ENCODE measurements at regions of chr9 and their contacts with region 1.

Region 1: GRCh38 chr9:34665381-34666250 is 3.2 kb upstream of the CCL27 start:
- DNase-seq: peak; percentile 93
- H3K4me3 Mint-ChIP-seq: peak overlapping the region; percentile 77
- H3K27ac Mint-ChIP-seq: peak overlapping the region; percentile 80
- H3K4me1 Mint-ChIP-seq: peaks cover 39% of the 10 kb centered on the region
- H3K27me3 Mint-ChIP-seq: no peaks in the 10 kb centered on the region

Region 2: GRCh38 chr9:34611829-34612630 is 53.6 kb before region 1 on chr9 and contains the start of gene RPP25L:
- CTCF ChIA-PET with region 1: interaction called, 3 read pairs
- intact Hi-C with region 1: loop called (anchors 1 kb)
- DNase-seq: peak; percentile 80
- H3K4me3 Mint-ChIP-seq: peak within 1 kb of the TSS; percentile 87
- H3K27ac Mint-ChIP-seq: peak within 1 kb of the TSS; percentile 83
- H3K4me1 Mint-ChIP-seq: peaks cover 21% of the 10 kb centered on the region
- H3K27me3 Mint-ChIP-seq: no peaks in the 10 kb centered on the region
- total RNA-seq, gene RPP25L: 25.7 to 27.0 TPM

Region 3: DNA sequence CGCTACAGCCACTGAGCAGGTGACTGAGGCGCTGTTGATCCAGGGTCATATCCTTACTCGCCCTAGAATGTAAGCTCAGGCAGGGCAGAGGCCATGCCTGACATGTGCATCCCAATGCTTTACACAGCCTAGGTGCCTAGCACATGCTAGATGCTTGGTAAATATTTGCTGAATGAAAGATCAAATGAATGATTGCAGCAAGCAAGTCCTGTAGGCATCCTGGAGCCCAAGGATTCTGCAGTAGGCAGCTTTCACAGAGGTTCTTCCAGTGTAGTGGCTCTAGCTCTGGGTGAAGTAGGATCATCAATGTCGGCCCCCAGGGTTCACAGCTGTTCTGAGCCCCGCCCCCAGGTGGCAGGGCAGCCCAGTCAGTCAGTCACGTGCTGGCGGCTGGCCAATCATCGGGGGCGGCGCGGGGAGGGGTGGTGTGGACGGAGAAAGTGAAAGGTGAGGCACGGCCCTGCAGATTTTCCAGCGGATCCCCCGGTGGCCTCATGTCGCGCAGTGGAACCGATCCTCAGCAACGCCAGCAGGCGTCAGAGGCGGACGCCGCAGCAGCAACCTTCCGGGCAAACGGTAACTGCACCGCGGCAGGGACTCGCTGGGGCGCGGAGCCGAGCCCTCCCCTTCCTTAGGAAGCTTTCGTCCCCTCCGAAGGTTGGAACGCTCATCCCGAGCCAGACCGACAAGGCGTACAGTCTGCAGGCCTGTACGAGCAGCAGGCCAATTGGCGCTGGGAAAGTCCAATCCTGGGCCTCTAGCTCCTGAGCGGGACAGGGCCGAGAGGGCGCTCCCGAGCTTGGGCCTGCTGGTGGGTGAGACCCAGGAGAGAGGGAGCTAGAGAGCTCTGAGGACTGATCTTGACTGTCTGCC is 19.2 kb before region 1 on chr9 and contains the start of gene GALT:
- CTCF ChIA-PET with region 1: interaction called, 40 read pairs
- intact Hi-C with region 1: loop called (anchors 1 kb)
- DNase-seq: peak; percentile 98
- H3K4me3 Mint-ChIP-seq: peak within 1 kb of the TSS; percentile 86
- H3K27ac Mint-ChIP-seq: peak within 1 kb of the TSS; percentile 83
- H3K4me1 Mint-ChIP-seq: peaks cover 18% of the 10 kb centered on the region
- H3K27me3 Mint-ChIP-seq: no peaks in the 10 kb centered on the region
- total RNA-seq, gene GALT: 42.0 to 44.6 TPM

Region 4: DNA sequence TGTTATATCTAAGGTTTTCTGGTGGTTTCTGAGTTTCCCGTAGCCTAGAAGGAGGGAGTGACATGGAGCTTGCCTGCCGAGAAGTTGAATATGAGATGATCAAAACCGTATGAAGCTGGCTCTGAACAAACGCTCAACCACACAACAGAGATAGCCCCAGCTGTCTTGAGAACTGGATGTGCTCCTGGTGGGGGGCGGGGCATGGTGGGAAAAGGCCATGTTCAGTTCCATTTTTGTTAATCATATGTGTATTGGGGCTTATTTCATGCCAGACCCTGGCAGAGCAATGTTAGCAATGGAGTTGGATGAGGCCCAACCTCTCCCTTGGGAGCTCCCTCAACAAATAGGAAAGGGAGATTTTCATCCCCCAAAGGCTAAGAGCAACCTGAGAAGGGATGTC is 20.6 kb after region 1 on chr9:
- CTCF ChIA-PET with region 1: interaction called, 3 read pairs
- intact Hi-C with region 1: loop called (anchors 1 kb)
- DNase-seq: no peak
- H3K4me3 Mint-ChIP-seq: no peak overlapping the region
- H3K27ac Mint-ChIP-seq: no peak overlapping the region
- H3K4me1 Mint-ChIP-seq: peaks cover 9% of the 10 kb centered on the region
- H3K27me3 Mint-ChIP-seq: no peaks in the 10 kb centered on the region

Region 5: GRCh38 chr9:35071814-35072460 is 406.3 kb after region 1 on chr9:
- CTCF ChIA-PET with region 1: no interaction called
- intact Hi-C with region 1: loop called (anchors 2 kb)
- DNase-seq: peak; percentile 77
- H3K4me3 Mint-ChIP-seq: peak overlapping the region; percentile 92
- H3K27ac Mint-ChIP-seq: peak overlapping the region; percentile 96
- H3K4me1 Mint-ChIP-seq: peaks cover 57% of the 10 kb centered on the region
- H3K27me3 Mint-ChIP-seq: no peaks in the 10 kb centered on the region

Region 6: GRCh38 chr9:35111001-35111933 is 445.7 kb after region 1 on chr9:
- CTCF ChIA-PET with region 1: no interaction called
- intact Hi-C with region 1: loop called (anchors 2 kb)
- DNase-seq: peak; percentile 97
- H3K4me3 Mint-ChIP-seq: peak overlapping the region; percentile 56
- H3K27ac Mint-ChIP-seq: peak overlapping the region; percentile 88
- H3K4me1 Mint-ChIP-seq: peaks cover 44% of the 10 kb centered on the region
- H3K27me3 Mint-ChIP-seq: no peaks in the 10 kb centered on the region

Region 7: DNA sequence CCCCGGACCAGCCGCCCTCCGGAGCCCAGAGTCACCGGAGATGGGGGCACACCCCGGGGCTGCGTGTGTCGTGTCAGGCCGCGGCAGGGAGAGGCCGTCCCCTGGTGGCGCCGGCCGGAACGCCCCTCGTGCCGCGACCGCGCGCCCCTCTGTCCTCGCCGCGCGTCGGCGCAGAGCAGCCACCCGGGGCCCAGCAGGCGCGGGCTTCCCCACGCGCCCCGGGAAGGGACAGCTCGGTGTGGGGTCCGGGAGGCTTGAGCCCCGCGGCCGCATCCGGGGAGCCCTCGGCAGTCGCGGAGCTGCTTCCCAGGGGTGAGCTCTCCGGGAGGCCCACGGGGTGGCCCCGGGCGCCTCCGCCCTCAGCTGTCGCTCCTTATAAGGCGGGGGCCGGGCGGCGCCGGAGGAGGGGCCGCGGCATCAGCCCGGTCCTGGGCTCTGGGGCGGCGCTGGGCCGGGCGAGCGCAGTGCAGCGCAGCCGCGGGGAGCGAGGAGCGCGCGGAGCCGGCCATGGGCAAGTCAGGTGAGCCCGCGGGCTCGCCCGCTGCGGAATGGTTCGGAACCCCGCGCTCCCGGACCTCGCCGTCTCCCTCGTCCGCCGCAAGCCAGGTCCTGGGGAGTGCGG is 1470.8 kb after region 1 on chr9 and contains the start of gene GLIPR2:
- CTCF ChIA-PET with region 1: no interaction called
- intact Hi-C with region 1: loop called (anchors 10 kb)
- DNase-seq: peak; percentile 80
- H3K4me3 Mint-ChIP-seq: peak within 1 kb of the TSS; percentile 86
- H3K27ac Mint-ChIP-seq: no peak within 1 kb of the TSS
- H3K4me1 Mint-ChIP-seq: peaks cover 44% of the 10 kb centered on the region
- H3K27me3 Mint-ChIP-seq: no peaks in the 10 kb centered on the region
- total RNA-seq, gene GLIPR2: 8.0 to 9.7 TPM